Prostate gland (tissue), 2 donors: ENCODE measurements at regions of chr17 and their contacts with region 1.

Region 1: GRCh38 chr17:1186923-1187771 is 7.4 kb upstream of the ABR start:
- DNase-seq: peak; percentile 69
- H3K4me3 ChIP-seq: no peak overlapping the region
- H3K27ac ChIP-seq: peak overlapping the region in 1 of 2 donors; percentile 44
- H3K4me1 ChIP-seq: peaks cover 4% of the 10 kb centered on the region
- H3K27me3 ChIP-seq: no peaks in the 10 kb centered on the region
- CTCF ChIP-seq: peak; percentile 93 to 97 (median 96)
- POLR2A ChIP-seq: no peak

Region 2: GRCh38 chr17:708132-708531 is 479.0 kb before region 1 on chr17:
- intact Hi-C with region 1: no loop called
- DNase-seq: no peak
- H3K4me3 ChIP-seq: no peak overlapping the region
- H3K27ac ChIP-seq: no peak overlapping the region
- H3K4me1 ChIP-seq: no peaks in the 10 kb centered on the region
- H3K27me3 ChIP-seq: no peaks in the 10 kb centered on the region
- CTCF ChIP-seq: no peak
- POLR2A ChIP-seq: no peak

Region 3: DNA sequence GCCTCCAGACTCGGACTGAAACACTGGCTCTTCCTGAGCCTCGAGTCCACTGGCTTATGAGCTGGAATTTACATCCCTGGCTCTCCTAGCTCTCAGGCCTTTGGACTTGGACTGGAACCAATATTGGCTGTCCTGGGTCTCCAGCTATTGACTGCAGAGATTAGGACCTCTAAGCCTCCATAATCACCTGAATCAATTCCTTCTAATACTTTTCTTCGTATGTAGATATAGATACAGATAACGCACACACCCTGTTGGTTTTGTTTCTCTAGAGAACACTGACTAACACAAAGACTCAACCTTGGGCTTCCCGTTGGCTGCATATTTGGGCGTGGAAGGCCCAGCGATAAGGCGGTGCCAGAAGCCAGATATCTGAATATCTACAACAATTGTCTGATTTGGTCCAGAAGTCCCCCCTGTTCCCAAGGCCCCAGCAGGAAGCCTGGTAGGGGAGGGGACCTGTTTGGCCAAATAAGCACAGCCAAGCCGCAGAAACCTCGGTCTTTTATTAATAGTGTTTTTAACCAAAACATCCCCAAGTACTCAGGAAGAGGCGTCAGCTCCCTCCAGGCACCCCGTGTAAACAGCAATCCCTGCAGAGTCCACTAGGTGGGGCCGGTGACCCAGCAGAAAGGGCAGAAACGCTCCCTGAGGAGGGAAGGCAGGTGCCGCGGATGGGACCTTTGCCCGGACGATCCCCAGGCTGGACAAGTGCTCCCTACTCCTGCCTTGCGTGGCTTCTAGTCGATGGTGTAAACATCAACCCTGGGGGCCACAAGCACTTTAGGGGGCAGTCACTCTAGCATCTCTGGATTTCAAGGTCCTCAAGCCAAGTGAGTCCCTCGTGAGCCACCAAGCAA is 64.4 kb before region 1 on chr17:
- intact Hi-C with region 1: loop called (anchors 1 kb)
- DNase-seq: peak; percentile 72
- H3K4me3 ChIP-seq: no peak overlapping the region
- H3K27ac ChIP-seq: peak overlapping the region; percentile 30 to 33
- H3K4me1 ChIP-seq: no peaks in the 10 kb centered on the region
- H3K27me3 ChIP-seq: no peaks in the 10 kb centered on the region
- CTCF ChIP-seq: peak; percentile 80 to 96 (median 90)
- POLR2A ChIP-seq: no peak